ENCODE measurements at regions of chr3 and their contacts with region 1.

Region 1: DNA sequence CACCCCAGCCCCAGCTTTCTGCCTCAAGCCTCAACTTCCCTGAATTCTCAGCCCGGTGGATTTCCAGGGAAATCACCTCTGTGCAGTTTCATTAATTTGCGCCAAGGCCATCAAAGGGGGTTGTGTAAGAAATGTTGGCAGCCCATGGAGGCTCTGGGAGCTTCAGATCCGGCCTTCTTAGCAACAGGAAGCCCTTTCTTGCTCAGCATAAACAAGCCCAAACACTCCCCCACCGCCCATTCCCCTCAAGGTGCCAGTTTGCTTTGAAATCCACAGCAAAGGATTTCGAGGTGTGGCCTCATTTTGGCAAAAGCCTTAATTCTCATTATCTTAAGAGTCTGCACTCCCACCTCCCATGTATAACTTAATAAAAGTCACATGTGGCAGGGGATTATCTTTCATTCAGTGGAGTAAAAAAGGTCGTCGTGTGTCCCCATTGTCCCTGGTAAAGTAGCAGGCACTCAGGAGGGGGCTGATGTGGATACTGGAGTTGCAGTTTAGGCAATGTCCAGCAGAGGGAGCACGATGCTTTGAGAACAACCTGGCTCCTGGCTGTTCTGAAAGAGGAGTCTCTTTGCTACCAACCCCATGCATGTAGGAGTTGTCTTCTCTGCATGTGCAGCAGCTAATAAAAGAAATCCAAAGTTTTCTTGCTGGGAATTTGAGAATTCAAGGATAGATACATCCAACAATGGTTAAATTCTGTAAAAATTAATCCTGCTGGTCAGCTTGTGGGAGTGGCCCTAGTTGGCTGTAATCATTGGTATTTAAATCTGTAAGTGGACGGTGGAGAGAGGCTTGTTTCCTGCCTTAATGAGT is 39.5 kb downstream of the EBLN2 start:
- DNase-seq: peak; percentile 84
- ATAC-seq: peak; percentile 88 to 91

Region 2: DNA sequence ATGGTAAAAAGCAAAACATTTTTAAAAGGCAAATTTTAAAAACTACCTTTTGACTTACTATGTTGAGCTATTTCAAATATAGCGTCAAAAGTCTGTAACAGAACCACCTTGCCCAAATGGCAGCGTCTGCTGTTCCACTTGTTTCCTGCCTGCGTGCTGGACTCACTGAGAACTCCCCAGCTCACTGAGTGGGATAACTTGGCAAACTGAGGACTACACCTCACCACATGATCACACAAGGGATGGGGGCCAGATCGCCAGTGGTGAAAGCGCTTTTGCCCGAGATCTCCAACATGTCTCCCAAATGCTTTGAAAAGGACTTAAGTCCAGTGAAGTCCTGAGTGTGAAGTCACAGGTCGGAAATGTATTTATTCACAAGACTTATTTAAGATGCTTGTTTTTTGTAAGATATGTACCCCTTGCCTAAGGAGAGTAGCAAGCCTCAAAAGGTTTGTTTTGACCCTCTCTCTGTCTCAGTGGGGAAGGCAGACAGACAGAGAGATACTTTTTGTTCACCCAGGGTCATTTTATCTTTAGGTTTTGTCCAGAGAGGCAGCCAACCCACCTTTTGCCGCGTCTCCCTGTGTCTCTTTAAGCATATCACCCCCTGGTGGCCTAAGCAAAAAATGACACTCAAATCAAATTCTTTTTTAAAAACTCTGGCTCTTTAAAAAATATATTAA is 331.2 kb after region 1 on chr3:
- intact Hi-C with region 1: loop called (anchors 2 to 10 kb)
- DNase-seq: peak; percentile 40
- ATAC-seq: peak in 1 of 2 donors; percentile 46

Region 3: DNA sequence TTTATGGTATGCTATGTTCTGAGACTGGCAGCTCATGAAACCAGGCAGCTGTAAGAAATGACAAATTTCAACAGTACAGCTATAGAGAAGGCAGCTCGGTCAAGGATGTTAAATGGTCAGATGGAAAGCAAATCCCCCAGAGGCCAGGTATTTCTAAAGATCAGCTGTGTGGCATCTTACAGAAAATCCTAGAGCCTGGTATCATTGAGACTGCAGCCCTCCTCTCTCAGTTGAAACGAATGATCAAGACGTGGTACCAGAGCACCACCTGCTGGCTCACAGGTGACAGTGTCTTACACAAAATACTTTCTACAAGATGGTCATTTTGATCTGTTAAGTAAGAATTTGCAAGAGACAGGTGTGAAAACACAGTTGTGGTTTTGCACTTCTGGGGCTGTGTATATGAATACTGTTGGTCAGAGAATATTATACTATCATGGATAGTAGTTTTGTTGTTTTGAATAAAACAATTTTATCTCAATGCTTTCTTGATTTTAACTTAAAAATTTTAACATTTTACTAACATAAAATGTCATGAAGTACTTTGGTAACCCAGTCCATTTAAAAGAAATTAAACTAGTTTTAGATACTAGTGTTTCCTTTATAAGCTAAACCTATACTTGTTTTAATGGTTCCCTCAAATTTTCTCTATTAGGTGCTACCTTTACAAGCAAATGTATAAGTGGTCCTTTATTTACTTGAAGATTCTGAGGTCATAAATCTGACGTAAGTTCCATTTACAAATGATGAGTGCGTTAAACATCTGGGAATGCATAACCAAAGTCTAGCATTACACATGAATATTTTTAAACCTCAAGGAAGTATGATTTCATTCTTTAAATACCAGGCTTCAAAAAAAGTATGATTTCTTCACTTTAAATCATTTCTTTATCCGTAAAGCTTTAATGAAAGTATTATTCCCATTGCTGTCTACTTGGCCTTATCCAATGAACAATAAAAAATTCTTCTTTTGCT is 401.9 kb after region 1 on chr3:
- intact Hi-C with region 1: loop called in 1 of 2 experiments (anchors 1 kb)
- DNase-seq: peak; percentile 79
- ATAC-seq: peak; percentile 66 to 81